Activated CD4-positive, alpha-beta T cell treated with anti-CD3 and anti-CD28 coated beads for 36 hours (primary cell): ENCODE measurements at regions of chr16 and their contacts with region 1.

Region 1: GRCh38 chr16:25764466-25764865 is 72.7 kb downstream of the HS3ST4 start:
- DNase-seq: no peak
- ATAC-seq: no peak
- H3K4me3 Mint-ChIP-seq: no peak overlapping the region
- H3K27ac Mint-ChIP-seq: no peak overlapping the region
- H3K4me1 Mint-ChIP-seq: peaks cover 3% of the 10 kb centered on the region
- H3K27me3 Mint-ChIP-seq: no peaks in the 10 kb centered on the region

Region 2: DNA sequence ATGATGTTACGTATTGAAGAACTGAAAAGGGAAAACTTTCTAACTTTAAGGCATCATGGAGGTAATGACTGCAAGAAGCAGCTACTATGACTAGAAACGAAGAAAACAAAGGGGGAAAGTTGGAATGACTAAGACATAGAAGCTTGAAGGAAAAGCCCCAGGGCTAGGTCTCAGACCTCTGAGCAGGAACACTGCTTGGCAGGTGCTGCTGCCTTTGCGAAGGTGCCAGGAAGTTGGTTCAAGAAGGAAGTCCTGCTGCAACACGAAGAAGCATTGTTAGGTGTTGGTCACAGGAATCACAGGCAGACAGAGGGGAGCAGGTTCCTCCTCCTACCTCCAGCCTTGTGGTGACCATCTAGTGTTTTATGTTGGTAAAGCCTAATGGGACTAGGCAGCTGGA is 120.8 kb before region 1 on chr16:
- CTCF ChIA-PET with region 1: no interaction called
- POLR2A ChIA-PET with region 1: interaction called, 10 read pairs
- intact Hi-C with region 1: no loop called
- DNase-seq: no peak
- ATAC-seq: no peak
- H3K4me3 Mint-ChIP-seq: no peak overlapping the region
- H3K27ac Mint-ChIP-seq: no peak overlapping the region
- H3K4me1 Mint-ChIP-seq: no peaks in the 10 kb centered on the region
- H3K27me3 Mint-ChIP-seq: peaks cover 12% of the 10 kb centered on the region